CD8-positive, alpha-beta T cell (primary cell): ENCODE measurements at regions of chr11 and their contacts with region 1.

Region 1: DNA sequence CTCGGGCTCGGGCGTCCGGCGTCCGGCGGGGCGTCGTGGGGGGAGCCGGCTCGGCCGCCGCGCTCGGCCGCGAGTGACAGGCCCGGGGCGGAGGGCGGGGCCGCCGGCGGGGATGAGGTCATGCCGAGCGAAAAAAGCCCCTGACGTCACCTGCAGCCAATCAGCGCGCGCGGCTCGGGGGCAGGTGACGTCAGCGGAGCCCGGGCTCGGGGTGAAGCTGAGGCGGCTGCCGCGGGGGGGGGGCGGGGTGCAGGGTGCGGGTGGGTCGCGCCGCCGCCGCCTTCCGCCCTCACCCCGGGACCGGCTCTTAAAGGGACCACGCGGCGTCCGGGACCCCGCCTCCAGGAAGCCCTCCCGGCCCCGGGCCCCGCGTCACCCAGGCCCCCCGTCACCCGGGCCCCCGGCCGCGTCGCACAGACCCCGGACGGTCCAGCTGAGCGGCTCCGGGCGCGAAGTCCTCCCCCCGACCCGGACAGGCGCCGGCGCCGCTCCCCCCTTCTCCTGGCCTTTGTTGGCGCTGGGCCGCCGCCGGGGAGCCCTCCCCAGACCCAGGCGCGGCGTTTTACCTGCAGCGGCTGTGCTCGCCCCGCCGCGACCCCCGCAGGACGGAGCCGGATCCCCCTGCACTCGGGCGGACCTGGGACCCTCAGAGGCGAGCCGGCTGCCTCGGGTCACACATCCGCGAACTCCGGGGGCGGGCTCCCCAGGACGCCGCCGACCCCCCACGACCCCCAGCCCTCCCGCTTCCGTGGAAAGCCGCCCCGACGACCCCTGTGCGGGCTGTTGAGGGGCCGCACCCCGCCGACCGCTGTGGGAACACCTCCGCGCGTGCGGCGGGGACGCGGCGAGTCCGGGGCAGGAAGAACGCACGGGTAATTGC is at the start of gene DUSP8:
- DNase-seq: peak; percentile 90 to 98 (median 95)
- ATAC-seq: peak; percentile 58
- H3K4me3 ChIP-seq: peak within 1 kb of the TSS; percentile 51 to 63
- H3K4me3 Mint-ChIP-seq: peak within 1 kb of the TSS; percentile 82
- H3K27ac ChIP-seq: peak within 1 kb of the TSS; percentile 59 to 86
- H3K27ac Mint-ChIP-seq: peak within 1 kb of the TSS; percentile 92
- H3K4me1 ChIP-seq: peaks cover 54% of the 10 kb centered on the region
- H3K4me1 Mint-ChIP-seq: peaks cover 37% of the 10 kb centered on the region
- H3K27me3 ChIP-seq: no peaks in the 10 kb centered on the region
- H3K27me3 Mint-ChIP-seq: no peaks in the 10 kb centered on the region
- CTCF ChIP-seq: no peak
- total RNA-seq, gene DUSP8: 123 to 130 TPM

Region 2: DNA sequence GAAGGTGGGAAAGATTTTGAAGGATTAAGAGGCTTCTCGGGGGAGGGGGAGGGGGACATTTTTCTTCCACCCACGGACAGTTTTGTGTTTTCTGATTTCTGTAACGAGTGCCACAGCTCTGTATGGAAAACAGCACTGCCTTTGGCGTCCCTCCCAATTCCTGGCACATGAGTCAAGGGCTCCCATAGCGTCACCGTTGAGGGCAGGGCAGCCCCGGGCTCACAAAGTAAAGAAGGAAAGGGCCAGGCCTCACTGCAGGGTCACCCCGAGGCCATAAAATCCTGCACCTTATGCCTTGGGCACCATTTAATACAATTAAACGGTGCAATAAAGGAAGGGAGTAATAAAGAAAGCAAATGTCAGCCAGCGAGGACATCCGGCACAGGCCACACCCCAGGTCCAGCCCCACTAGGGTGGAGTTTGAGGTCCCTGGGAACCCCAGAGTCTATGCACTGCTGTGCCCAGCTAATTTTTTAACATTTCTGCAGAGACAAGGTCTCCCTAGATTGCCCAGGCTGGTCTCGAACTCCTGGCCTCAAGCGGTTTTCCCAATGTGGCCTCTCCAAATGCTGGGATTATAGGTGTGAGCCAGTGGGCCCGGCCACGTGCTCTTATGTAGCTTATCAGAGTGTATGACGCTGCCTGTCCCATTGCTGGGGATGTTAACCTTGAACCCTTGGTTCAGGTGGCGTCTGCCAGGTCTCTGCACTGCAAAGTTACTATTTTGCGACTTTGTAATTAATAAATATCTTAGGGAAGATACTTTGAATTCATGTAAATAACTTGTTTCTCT is 511.4 kb before region 1 on chr11:
- CTCF ChIA-PET with region 1: no interaction called
- POLR2A ChIA-PET with region 1: no interaction called
- intact Hi-C with region 1: no loop called
- DNase-seq: no peak
- ATAC-seq: no peak
- H3K4me3 ChIP-seq: no peak overlapping the region
- H3K4me3 Mint-ChIP-seq: no peak overlapping the region
- H3K27ac ChIP-seq: no peak overlapping the region
- H3K27ac Mint-ChIP-seq: no peak overlapping the region
- H3K4me1 ChIP-seq: peaks cover 6% of the 10 kb centered on the region
- H3K4me1 Mint-ChIP-seq: peaks cover 12% of the 10 kb centered on the region
- H3K27me3 ChIP-seq: no peaks in the 10 kb centered on the region
- H3K27me3 Mint-ChIP-seq: peaks cover 19% of the 10 kb centered on the region
- CTCF ChIP-seq: no peak

Region 3: GRCh38 chr11:1262172-1263006 is 310.0 kb before region 1 on chr11:
- CTCF ChIA-PET with region 1: interaction called, 4 read pairs
- POLR2A ChIA-PET with region 1: no interaction called
- intact Hi-C with region 1: loop called (anchors 5 kb)
- DNase-seq: peak; percentile 78 to 92 (median 86)
- ATAC-seq: peak; percentile 91
- H3K4me3 ChIP-seq: peak overlapping the region; percentile 58
- H3K4me3 Mint-ChIP-seq: peak overlapping the region; percentile 86
- H3K27ac ChIP-seq: peak overlapping the region; percentile 85 to 90
- H3K27ac Mint-ChIP-seq: peak overlapping the region; percentile 91
- H3K4me1 ChIP-seq: peaks cover 18% of the 10 kb centered on the region
- H3K4me1 Mint-ChIP-seq: peaks cover 18% of the 10 kb centered on the region
- H3K27me3 ChIP-seq: no peaks in the 10 kb centered on the region
- H3K27me3 Mint-ChIP-seq: no peaks in the 10 kb centered on the region
- CTCF ChIP-seq: no peak

Region 4: DNA sequence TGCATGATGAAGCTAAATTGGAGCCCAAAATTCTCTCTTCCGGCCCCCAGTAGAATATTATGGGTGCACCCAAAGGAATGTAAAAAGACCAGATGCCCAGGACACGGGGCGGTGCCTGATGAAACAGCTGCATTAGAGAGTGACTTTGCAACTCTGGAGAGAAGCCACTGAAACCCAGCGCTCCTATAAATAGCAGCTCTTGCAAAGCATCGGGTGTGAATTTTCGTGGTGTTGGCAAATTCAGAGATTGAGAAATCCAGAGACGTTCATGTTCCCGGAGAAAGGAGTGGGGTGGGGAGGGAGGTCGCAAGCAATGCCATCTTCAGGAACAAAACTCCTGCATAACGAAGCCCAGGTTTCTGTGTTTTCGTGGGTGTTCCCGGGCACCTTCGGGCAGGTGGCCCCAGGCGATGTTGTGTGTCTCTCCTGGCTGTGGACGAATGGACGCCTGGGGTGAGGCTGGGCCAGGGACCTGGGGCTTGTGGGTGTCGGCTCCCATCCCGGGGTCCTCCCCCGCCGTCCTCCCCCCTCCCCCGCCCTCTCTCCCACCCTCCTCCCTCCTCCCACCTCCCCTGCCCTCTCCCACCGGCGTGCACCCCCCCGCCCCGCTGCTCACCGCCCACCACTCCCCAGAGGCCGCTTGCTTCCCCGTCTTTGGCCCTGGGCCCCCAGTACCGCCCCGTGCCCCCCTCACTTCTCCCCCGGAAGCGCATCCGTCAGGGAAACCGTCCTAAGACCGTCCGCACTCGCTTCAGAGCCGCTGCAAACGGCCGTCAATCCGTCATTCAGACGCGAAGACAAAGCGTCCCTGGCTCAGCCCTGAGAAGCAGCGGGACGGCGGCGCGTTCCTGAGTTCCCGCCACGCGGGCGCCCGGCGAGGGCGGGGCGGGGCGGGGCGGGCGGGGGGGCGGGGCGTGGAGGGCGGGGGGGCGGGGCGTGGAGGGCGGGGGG is 236.4 kb before region 1 on chr11:
- CTCF ChIA-PET with region 1: no interaction called
- POLR2A ChIA-PET with region 1: no interaction called
- intact Hi-C with region 1: loop called in 1 of 2 experiments (anchors 5 kb)
- DNase-seq: peak in 8 of 9 experiments; percentile 50 to 85 (median 66)
- ATAC-seq: peak; percentile 69
- H3K4me3 ChIP-seq: peak overlapping the region; percentile 45 to 60
- H3K4me3 Mint-ChIP-seq: peak overlapping the region; percentile 80
- H3K27ac ChIP-seq: peak overlapping the region in 1 of 2 experiments; percentile 19
- H3K27ac Mint-ChIP-seq: peak overlapping the region; percentile 71
- H3K4me1 ChIP-seq: peaks cover 12% of the 10 kb centered on the region
- H3K4me1 Mint-ChIP-seq: peaks cover 18% of the 10 kb centered on the region
- H3K27me3 ChIP-seq: no peaks in the 10 kb centered on the region
- H3K27me3 Mint-ChIP-seq: no peaks in the 10 kb centered on the region
- CTCF ChIP-seq: no peak

Region 5: GRCh38 chr11:1515082-1516060 is 57.1 kb before region 1 on chr11:
- CTCF ChIA-PET with region 1: interaction called, 3 read pairs
- POLR2A ChIA-PET with region 1: no interaction called
- intact Hi-C with region 1: loop called in 1 of 2 experiments (anchors 1 kb)
- DNase-seq: peak; percentile 56 to 84 (median 74)
- ATAC-seq: peak; percentile 67
- H3K4me3 ChIP-seq: no peak overlapping the region
- H3K4me3 Mint-ChIP-seq: peak overlapping the region; percentile 26
- H3K27ac ChIP-seq: no peak overlapping the region
- H3K27ac Mint-ChIP-seq: peak overlapping the region; percentile 18
- H3K4me1 ChIP-seq: peaks cover 51% of the 10 kb centered on the region
- H3K4me1 Mint-ChIP-seq: peaks cover 70% of the 10 kb centered on the region
- H3K27me3 ChIP-seq: no peaks in the 10 kb centered on the region
- H3K27me3 Mint-ChIP-seq: no peaks in the 10 kb centered on the region
- CTCF ChIP-seq: peak; percentile 95

Region 6: GRCh38 chr11:1546536-1547400 is 25.7 kb before region 1 on chr11:
- CTCF ChIA-PET with region 1: interaction called, 170 read pairs
- POLR2A ChIA-PET with region 1: interaction called, 23 read pairs
- intact Hi-C with region 1: loop called (anchors 1 kb)
- DNase-seq: peak in 8 of 9 experiments; percentile 22 to 78 (median 60)
- ATAC-seq: peak; percentile 82
- H3K4me3 ChIP-seq: peak overlapping the region in 1 of 2 experiments; percentile 43
- H3K4me3 Mint-ChIP-seq: no peak overlapping the region
- H3K27ac ChIP-seq: no peak overlapping the region
- H3K27ac Mint-ChIP-seq: no peak overlapping the region
- H3K4me1 ChIP-seq: peaks cover 13% of the 10 kb centered on the region
- H3K4me1 Mint-ChIP-seq: peaks cover 4% of the 10 kb centered on the region
- H3K27me3 ChIP-seq: peaks cover 9 to 18% of the 10 kb centered on the region in 2 experiments
- H3K27me3 Mint-ChIP-seq: peaks cover 25% of the 10 kb centered on the region
- CTCF ChIP-seq: peak; percentile 82

Region 7: GRCh38 chr11:1598816-1599215 is 26.4 kb after region 1 on chr11:
- CTCF ChIA-PET with region 1: interaction called, 32 read pairs
- POLR2A ChIA-PET with region 1: interaction called, 4 read pairs
- intact Hi-C with region 1: no loop called
- DNase-seq: no peak
- ATAC-seq: no peak
- H3K4me3 ChIP-seq: no peak overlapping the region
- H3K4me3 Mint-ChIP-seq: no peak overlapping the region
- H3K27ac ChIP-seq: no peak overlapping the region
- H3K27ac Mint-ChIP-seq: no peak overlapping the region
- H3K4me1 ChIP-seq: no peaks in the 10 kb centered on the region
- H3K4me1 Mint-ChIP-seq: peaks cover 5% of the 10 kb centered on the region
- H3K27me3 ChIP-seq: peaks cover 2 to 4% of the 10 kb centered on the region in 2 experiments
- H3K27me3 Mint-ChIP-seq: peaks cover 43% of the 10 kb centered on the region
- CTCF ChIP-seq: no peak

Region 8: DNA sequence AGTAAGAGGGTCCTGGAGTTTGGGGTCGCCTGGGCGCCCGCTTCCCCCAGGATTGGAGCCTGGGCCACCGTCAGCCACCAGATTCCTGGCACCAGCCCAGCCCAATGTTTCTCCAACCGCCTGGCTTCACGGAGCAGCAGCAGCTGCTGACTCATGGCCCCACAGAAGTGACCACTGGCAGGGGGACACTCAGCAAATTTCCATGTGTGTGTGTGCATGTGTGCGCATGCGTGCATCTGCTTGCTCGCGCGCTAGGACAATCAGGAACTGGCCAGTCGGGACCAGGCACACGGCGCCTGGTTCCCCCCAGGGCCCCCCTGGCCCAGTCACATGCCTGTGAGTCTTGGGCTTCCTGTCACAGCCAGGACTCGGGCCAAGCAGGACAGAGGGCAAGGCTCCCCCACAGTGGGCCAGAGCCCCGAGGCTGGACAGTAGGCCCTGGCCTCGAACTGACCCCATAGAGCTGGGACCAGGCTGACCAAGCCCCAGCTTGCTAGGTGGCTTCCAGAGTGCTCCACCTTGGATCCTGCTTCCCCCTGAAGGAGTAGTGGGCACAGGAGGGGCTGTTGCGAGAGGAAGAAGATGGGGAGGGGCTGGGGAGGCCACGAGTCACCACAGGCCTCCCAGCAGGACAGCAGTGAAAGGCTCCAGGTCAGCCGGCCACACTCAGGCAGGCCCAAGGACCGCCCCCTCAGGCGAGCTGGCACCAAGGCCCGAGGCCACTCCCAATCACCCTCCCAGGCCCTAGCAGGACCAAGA is 188.1 kb after region 1 on chr11:
- CTCF ChIA-PET with region 1: no interaction called
- POLR2A ChIA-PET with region 1: no interaction called
- intact Hi-C with region 1: no loop called
- DNase-seq: peak in 1 of 9 experiments; percentile 47
- ATAC-seq: no peak
- H3K4me3 ChIP-seq: no peak overlapping the region
- H3K4me3 Mint-ChIP-seq: peak overlapping the region; percentile 11
- H3K27ac ChIP-seq: peak overlapping the region in 1 of 2 experiments; percentile 79
- H3K27ac Mint-ChIP-seq: peak overlapping the region; percentile 18
- H3K4me1 ChIP-seq: peaks cover 84% of the 10 kb centered on the region
- H3K4me1 Mint-ChIP-seq: peaks cover 68% of the 10 kb centered on the region
- H3K27me3 ChIP-seq: no peaks in the 10 kb centered on the region
- H3K27me3 Mint-ChIP-seq: no peaks in the 10 kb centered on the region
- CTCF ChIP-seq: no peak